HEK293 (cell line): ENCODE measurements at regions of chr9 and their contacts with region 1.

Region 1: DNA sequence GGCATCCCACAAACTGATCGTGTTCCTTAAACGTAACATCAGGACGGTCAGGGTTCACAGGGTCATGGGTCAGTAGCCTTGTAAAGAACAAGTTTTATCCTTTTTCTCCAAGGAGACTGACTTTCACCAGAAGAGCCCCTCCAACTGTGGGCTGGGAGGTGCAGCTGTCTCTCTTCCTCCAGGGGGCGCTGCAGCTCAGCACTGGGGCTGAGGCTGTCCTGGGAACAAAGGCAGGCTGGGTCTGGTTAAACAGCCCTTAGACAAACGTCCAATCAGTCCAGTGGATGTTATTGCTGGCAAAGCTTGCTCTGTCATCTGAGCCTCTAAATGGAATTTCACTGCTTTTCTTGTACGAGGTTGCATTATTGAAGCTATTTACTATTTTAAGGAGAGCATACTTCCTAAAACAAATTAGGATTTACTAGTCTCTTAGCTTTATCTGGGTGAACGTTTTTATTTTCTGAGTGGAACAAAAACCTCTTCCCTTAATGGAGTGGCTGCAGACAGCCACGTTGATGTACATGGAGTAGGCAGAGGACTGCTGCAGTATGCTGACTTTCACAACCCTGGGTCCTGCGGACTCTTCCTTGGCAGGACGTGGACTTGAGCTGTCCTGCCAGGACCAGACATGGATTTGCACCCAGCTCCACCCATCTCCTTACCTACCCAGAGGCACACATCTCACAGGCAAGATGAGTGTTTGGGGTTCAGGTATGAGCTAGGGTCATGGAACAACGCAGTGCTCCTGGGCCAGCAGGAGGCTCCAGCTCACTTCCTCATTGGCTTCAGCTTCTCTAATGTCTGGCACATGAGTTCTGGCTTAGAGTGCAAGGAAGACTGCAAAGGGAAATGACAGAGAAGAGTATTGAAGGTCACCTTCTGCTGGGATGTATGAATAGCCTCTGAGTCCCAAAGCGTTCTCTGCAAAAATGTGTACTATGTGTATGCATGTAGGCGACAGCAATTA is 7.8 kb downstream of the EXOSC2 start:
- H3K4me3 ChIP-seq: no peak overlapping the region
- H3K27ac ChIP-seq: no peak overlapping the region
- H3K4me1 ChIP-seq: no peaks in the 10 kb centered on the region
- CTCF ChIP-seq: peak; percentile 88

Region 2: DNA sequence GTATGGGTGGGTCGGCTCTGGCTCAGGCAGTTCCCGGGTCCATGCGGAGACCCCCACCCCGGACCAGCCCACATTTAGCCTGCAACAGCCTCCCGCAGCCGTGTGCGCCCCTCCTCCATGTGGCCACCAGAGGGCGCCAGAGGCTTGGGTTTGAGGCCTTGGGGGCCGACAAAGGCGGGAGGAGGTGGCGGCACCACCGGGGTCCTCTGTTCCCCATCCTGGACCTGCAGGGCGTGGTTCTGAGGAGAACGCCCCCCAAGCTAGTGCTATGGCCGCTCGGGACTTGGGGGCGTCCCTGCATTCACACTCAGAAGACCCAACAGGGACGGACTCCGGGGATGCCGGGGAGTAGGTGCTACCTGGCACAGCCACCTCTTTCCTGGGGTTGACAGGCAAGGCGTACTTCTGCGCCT is 240.1 kb before region 1 on chr9:
- CTCF ChIA-PET with region 1: interaction called, 23 read pairs
- POLR2A ChIA-PET with region 1: interaction called, 4 read pairs
- H3K4me3 ChIP-seq: no peak overlapping the region
- H3K27ac ChIP-seq: no peak overlapping the region
- H3K4me1 ChIP-seq: no peaks in the 10 kb centered on the region
- CTCF ChIP-seq: peak; percentile 92

Region 3: GRCh38 chr9:130682490-130683121 is 18.7 kb before region 1 on chr9:
- CTCF ChIA-PET with region 1: interaction called, 46 read pairs
- POLR2A ChIA-PET with region 1: no interaction called
- H3K4me3 ChIP-seq: peak overlapping the region; percentile 8
- H3K27ac ChIP-seq: no peak overlapping the region
- H3K4me1 ChIP-seq: no peaks in the 10 kb centered on the region; the same call in 1 of the 2 replicates
- CTCF ChIP-seq: peak; percentile 57; the same call in 1 of the 2 replicates

Region 4: GRCh38 chr9:130712564-130713285 is 11.4 kb after region 1 on chr9:
- CTCF ChIA-PET with region 1: interaction called, 50 read pairs
- POLR2A ChIA-PET with region 1: interaction called, 7 read pairs
- H3K4me3 ChIP-seq: peak overlapping the region; percentile 96
- H3K27ac ChIP-seq: peak overlapping the region; percentile 88
- H3K4me1 ChIP-seq: no peaks in the 10 kb centered on the region
- CTCF ChIP-seq: no peak

Region 5: GRCh38 chr9:130732131-130732530 is 30.8 kb after region 1 on chr9:
- CTCF ChIA-PET with region 1: interaction called, 15 read pairs
- POLR2A ChIA-PET with region 1: no interaction called
- H3K4me3 ChIP-seq: no peak overlapping the region
- H3K27ac ChIP-seq: no peak overlapping the region
- H3K4me1 ChIP-seq: no peaks in the 10 kb centered on the region
- CTCF ChIP-seq: no peak

Region 6: GRCh38 chr9:130770679-130771442 is 69.5 kb after region 1 on chr9:
- CTCF ChIA-PET with region 1: interaction called, 23 read pairs
- POLR2A ChIA-PET with region 1: no interaction called
- H3K4me3 ChIP-seq: no peak overlapping the region
- H3K27ac ChIP-seq: no peak overlapping the region
- H3K4me1 ChIP-seq: no peaks in the 10 kb centered on the region
- CTCF ChIP-seq: peak; percentile 39; the same call in 1 of the 2 replicates

Region 7: GRCh38 chr9:130857864-130858738 is 156.8 kb after region 1 on chr9:
- CTCF ChIA-PET with region 1: interaction called, 400 read pairs
- POLR2A ChIA-PET with region 1: interaction called, 3 read pairs
- H3K4me3 ChIP-seq: no peak overlapping the region
- H3K27ac ChIP-seq: no peak overlapping the region
- H3K4me1 ChIP-seq: no peaks in the 10 kb centered on the region
- CTCF ChIP-seq: no peak

Region 8: DNA sequence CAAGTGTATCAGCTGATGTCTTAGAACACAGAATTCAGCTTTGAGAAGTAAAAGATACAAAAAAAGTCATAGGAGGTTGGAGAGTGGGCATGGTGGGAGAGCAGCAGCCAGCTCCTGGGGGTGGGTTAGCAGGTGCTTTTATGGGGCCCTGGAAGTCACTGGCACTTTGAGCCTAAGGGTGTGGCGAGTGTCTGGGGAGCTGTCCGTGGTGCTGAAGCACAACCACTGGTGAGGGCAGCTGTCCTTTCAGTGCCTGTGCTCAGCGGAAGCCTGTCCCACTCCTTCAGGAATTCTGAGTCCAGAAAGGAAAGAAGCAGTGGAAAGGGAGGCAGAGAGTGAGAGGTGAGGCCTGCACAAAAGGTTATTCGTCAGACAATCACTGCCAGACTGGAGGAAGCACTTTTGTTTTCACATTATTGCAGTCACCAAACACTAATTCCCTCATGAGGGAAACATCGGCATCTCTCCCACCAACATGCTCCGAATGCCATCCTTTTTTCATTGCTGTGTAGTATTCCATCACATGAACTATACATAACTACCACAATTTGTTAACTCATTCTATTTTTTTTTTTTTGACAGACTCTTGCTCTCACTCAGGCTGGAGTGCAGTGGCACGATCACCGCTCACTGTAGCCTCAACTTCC is 1098.0 kb after region 1 on chr9:
- CTCF ChIA-PET with region 1: no interaction called
- POLR2A ChIA-PET with region 1: no interaction called
- H3K4me3 ChIP-seq: no peak overlapping the region
- H3K27ac ChIP-seq: no peak overlapping the region
- H3K4me1 ChIP-seq: no peaks in the 10 kb centered on the region
- CTCF ChIP-seq: no peak